ENCODE measurements at regions of chr10 and their contacts with region 1.

Region 1: DNA sequence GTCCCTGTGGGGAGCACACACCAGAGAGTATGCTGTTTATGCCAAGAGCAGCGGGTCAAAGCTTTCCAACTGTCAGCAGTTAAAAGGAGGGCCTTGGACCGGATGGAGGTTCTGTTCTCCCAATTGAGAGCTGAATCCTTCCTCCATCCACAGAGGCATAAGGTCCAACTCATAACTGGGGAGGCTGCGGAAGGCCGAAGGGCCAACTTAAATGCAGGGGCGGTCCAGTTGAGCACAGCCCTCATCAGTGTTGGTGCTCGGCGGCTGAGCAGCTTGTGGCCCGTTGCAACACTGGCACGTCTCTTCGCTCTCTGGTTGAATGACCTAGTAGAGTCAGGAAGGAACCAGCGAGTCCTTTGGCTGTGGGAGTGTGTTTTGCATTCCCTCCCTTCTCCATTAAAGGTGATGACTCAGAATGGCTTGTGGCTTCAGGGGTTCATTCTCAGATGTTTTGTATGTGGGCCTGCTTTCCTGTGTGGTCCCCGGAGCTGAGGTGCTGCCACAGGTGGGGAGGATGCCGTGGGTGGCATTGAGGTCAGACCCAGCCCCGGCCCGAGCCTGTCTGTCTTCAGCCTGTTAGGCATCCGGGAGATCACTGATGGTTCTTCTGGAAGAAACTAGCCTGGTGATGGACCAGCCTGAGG is 44.8 kb upstream of the DMBT1 start:
- DNase-seq: peak; percentile 91
- H3K4me3 ChIP-seq: no peak overlapping the region
- H3K27ac ChIP-seq: peak overlapping the region; percentile 8
- H3K4me1 ChIP-seq: peaks cover 35% of the 10 kb centered on the region
- H3K27me3 ChIP-seq: no peaks in the 10 kb centered on the region
- CTCF ChIP-seq: no peak

Region 2: DNA sequence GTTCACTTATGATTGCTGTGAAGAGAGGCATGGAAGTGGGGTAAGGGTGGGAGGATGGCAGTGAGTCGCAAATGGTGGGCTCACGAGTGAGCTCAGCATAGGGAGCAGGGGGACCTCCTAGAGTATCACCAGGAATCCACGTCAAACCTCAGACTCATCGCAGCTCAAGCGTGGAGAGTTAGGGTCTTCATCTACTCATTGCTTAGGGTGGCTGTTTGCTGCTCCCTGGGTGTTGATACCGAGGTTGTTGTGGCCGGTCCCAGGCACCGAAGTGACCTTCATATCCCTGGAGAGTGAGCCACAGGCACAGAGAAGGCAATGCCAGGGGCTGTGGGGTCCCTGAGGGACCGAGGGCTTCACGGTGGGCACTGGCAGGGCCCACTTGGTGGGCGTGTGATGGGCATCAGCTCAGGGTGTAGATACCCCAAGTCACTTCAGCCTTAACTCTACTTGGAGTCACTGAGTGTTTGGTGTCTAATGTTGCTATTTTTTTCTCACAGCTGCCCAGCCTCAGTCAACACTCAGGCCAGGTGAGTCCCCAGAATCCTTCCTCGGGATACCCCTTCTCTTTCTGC is 61.7 kb after region 1 on chr10:
- CTCF ChIA-PET with region 1: no interaction called
- dilution Hi-C with region 1: loop called (anchors 5 kb)
- in situ Hi-C with region 1: no loop called
- intact Hi-C with region 1: no loop called
- DNase-seq: no peak
- H3K4me3 ChIP-seq: no peak overlapping the region
- H3K27ac ChIP-seq: no peak overlapping the region
- H3K4me1 ChIP-seq: no peaks in the 10 kb centered on the region
- H3K27me3 ChIP-seq: no peaks in the 10 kb centered on the region
- CTCF ChIP-seq: no peak